Right ventricle myocardium inferior (tissue), 1 donor: ENCODE measurements at regions of chr15 and their contacts with region 1.

Region 1: GRCh38 chr15:35545824-35546510 is at the start of gene DPH6:
- DNase-seq: peak; percentile 93
- ATAC-seq: peak; percentile 96
- total RNA-seq, gene DPH6: 14.1 TPM

Region 2: DNA sequence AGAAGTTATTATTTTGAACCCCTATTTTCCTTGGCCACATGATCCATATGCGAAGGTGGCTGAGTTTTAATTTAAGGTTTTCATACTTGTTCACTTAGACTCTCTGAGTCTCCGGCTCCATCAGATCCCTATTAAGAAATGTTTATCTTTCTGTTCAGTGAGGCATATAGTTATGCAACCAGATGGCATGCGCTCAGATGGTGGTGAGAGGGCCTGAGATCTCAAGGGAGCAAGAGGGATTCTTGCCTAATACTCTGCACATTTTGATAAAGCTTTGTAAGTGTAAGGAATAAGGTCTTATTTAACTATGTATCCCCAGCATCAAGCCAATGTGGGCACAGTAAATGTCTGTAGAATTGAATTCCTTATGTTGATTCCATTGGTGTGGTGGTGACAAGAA is 78.9 kb after region 1 on chr15:
- intact Hi-C with region 1: loop called (anchors 5 kb)
- DNase-seq: no peak
- ATAC-seq: peak; percentile 63

Region 3: GRCh38 chr15:35690698-35691116 is 144.7 kb after region 1 on chr15:
- intact Hi-C with region 1: loop called (anchors 5 kb)
- DNase-seq: no peak
- ATAC-seq: peak; percentile 95